MCF 10A (cell line): ENCODE measurements at regions of chr7 and their contacts with region 1.

Region 1: DNA sequence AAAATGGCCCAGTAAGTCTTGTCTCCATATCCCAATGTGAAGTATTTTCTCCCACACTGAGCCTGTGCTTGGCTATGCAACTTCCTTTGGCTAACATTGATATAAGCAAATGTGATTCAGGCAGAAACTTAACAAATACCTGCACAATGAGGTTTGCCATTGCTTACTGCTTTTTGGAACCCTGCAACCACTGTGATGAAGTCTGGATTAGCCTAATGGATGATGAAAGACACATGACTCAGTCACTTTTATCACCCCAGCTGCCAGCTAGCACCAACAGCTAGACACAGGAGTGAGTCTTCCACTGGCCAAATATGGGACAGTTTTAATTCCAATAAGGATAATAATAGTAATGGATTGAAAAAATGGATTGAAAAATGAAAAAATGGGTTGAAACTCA is 854.5 kb downstream of the GRM8 start:
- DNase-seq: peak; percentile 75
- H3K4me3 Mint-ChIP-seq: no peak overlapping the region
- H3K27ac Mint-ChIP-seq: peak overlapping the region; percentile 33
- H3K4me1 Mint-ChIP-seq: peaks cover 24% of the 10 kb centered on the region
- H3K27me3 Mint-ChIP-seq: no peaks in the 10 kb centered on the region
- CTCF ChIP-seq: no peak

Region 2: GRCh38 chr7:126574276-126575250 is 176.3 kb after region 1 on chr7:
- CTCF ChIA-PET with region 1: no interaction called
- POLR2A ChIA-PET with region 1: no interaction called
- intact Hi-C with region 1: loop called (anchors 5 kb)
- DNase-seq: peak; percentile 79
- H3K4me3 Mint-ChIP-seq: peak overlapping the region; percentile 57
- H3K27ac Mint-ChIP-seq: peak overlapping the region; percentile 91
- H3K4me1 Mint-ChIP-seq: peaks cover 13% of the 10 kb centered on the region
- H3K27me3 Mint-ChIP-seq: no peaks in the 10 kb centered on the region
- CTCF ChIP-seq: no peak